Vagina (tissue), 2 donors: ENCODE measurements at regions of chr9 and their contacts with region 1.

Region 1: DNA sequence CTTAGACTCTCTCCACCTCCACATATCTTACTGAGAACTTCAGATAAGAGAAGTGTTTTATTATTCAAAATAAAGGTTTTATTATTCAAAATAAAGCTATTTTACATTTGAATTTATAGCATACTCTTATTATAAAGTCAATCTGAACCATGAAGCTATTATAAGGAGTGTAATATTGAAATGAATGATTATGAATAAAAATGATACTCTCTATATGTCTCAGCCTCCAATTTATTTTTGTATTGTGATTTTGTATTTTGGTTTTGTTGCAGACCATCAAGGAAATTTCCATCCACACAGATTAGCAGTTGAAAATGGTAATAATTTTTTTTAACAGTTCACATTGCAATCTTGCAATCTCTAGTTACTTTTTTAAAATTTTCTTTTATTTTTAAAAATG is 10.2 kb downstream of the FOCAD start:
- DNase-seq: no peak
- H3K4me3 ChIP-seq: no peak overlapping the region
- H3K27ac ChIP-seq: no peak overlapping the region
- H3K4me1 ChIP-seq: no peaks in the 10 kb centered on the region
- H3K27me3 ChIP-seq: no peaks in the 10 kb centered on the region
- CTCF ChIP-seq: no peak
- POLR2A ChIP-seq: no peak

Region 2: GRCh38 chr9:20670395-20670794 is 23.9 kb before region 1 on chr9:
- intact Hi-C with region 1: no loop called
- DNase-seq: no peak
- H3K4me3 ChIP-seq: no peak overlapping the region
- H3K27ac ChIP-seq: no peak overlapping the region
- H3K4me1 ChIP-seq: no peaks in the 10 kb centered on the region
- H3K27me3 ChIP-seq: no peaks in the 10 kb centered on the region
- CTCF ChIP-seq: no peak
- POLR2A ChIP-seq: no peak

Region 3: GRCh38 chr9:20707708-20708107 is 13.5 kb after region 1 on chr9:
- intact Hi-C with region 1: loop called (anchors 2 kb)
- DNase-seq: no peak
- H3K4me3 ChIP-seq: no peak overlapping the region
- H3K27ac ChIP-seq: no peak overlapping the region
- H3K4me1 ChIP-seq: no peaks in the 10 kb centered on the region
- H3K27me3 ChIP-seq: no peaks in the 10 kb centered on the region
- CTCF ChIP-seq: no peak
- POLR2A ChIP-seq: no peak